Right ventricle myocardium inferior (tissue), 1 donor: ENCODE measurements at regions of chr3 and their contacts with region 1.

Region 1: DNA sequence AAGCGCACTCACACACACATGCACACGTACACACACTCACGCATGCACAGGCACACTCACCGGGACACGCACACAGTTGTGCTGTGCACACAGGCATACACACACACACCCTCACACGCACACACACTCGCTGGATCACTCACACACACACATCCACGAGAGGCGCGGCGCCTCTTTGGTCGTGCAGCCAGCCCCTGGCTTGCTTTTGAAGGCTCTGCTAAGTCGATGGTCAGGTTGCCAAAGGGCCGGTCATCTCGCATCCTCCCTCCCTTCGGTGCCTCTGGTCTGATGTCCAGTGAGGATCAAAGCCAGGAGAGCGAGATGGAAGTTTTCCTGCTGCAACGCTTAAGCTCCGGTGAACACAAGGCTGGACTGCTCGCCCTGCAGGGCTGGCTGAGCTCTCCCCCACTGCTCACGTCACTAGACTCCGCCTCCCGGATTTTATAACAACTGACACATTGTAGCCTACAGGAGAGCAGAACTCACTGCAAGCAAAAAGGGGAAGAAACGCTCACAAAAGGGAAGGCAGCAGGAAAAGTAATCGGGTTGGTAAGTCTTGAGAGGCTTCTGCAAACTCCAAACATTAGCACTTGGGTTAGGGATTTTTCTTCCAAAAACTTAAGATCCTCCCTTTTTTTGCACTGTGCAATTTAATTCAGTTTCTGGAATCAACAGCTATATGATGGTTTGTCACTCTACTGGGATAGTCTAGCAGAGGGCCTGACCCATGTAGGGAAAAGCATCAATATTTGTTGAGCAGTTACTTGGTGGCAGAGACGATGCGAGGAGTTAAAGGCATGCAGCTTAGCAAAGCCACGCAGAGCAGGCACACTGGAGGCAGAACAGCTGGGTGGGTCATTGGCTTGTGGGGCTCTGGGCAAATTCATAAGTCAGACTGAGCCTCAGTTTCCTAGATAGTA is at the start of gene SRGAP3:
- DNase-seq: peak; percentile 89
- ATAC-seq: peak; percentile 98
- total RNA-seq, gene SRGAP3: 6.1 TPM

Region 2: GRCh38 chr3:8970971-8971589 is 278.5 kb before region 1 on chr3:
- intact Hi-C with region 1: loop called (anchors 5 kb)
- DNase-seq: no peak
- ATAC-seq: peak; percentile 59

Region 3: GRCh38 chr3:9074079-9074478 is 175.5 kb before region 1 on chr3:
- intact Hi-C with region 1: loop called (anchors 5 kb)
- DNase-seq: no peak
- ATAC-seq: no peak

Region 4: DNA sequence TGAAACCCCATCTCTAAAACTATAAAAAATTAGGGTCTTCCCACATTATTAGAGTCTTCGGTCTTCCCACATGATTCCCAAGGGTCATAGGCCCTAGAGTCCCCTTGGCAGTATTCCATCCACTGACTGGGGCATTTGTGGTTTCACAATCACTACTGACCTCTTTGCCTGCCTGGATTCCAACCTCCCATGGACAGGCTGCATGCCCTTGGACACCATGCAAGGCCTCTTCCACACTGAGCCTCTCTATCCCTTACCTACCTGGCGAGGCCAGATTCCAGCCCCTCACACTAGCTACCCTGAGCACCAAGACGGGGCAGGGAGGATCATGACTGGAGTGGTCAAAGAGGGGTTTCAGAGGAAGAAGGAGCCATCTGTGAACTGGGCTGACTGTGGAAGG is 64.5 kb before region 1 on chr3:
- intact Hi-C with region 1: loop called (anchors 5 kb)
- DNase-seq: no peak
- ATAC-seq: no peak